Activated CD4-positive, alpha-beta T cell treated with anti-CD3 and anti-CD28 coated beads for 36 hours (primary cell): ENCODE measurements at regions of chr4 and their contacts with region 1.

Region 1: GRCh38 chr4:25439918-25440477 is 62.9 kb downstream of the ANAPC4 start:
- DNase-seq: peak; percentile 73
- ATAC-seq: peak; percentile 89
- H3K4me3 Mint-ChIP-seq: no peak overlapping the region
- H3K27ac Mint-ChIP-seq: no peak overlapping the region
- H3K4me1 Mint-ChIP-seq: no peaks in the 10 kb centered on the region
- H3K27me3 Mint-ChIP-seq: no peaks in the 10 kb centered on the region

Region 2: GRCh38 chr4:25128671-25129070 is 311.3 kb before region 1 on chr4:
- CTCF ChIA-PET with region 1: no interaction called
- POLR2A ChIA-PET with region 1: no interaction called
- intact Hi-C with region 1: no loop called
- DNase-seq: no peak
- ATAC-seq: no peak
- H3K4me3 Mint-ChIP-seq: no peak overlapping the region
- H3K27ac Mint-ChIP-seq: no peak overlapping the region
- H3K4me1 Mint-ChIP-seq: peaks cover 6% of the 10 kb centered on the region
- H3K27me3 Mint-ChIP-seq: no peaks in the 10 kb centered on the region

Region 3: DNA sequence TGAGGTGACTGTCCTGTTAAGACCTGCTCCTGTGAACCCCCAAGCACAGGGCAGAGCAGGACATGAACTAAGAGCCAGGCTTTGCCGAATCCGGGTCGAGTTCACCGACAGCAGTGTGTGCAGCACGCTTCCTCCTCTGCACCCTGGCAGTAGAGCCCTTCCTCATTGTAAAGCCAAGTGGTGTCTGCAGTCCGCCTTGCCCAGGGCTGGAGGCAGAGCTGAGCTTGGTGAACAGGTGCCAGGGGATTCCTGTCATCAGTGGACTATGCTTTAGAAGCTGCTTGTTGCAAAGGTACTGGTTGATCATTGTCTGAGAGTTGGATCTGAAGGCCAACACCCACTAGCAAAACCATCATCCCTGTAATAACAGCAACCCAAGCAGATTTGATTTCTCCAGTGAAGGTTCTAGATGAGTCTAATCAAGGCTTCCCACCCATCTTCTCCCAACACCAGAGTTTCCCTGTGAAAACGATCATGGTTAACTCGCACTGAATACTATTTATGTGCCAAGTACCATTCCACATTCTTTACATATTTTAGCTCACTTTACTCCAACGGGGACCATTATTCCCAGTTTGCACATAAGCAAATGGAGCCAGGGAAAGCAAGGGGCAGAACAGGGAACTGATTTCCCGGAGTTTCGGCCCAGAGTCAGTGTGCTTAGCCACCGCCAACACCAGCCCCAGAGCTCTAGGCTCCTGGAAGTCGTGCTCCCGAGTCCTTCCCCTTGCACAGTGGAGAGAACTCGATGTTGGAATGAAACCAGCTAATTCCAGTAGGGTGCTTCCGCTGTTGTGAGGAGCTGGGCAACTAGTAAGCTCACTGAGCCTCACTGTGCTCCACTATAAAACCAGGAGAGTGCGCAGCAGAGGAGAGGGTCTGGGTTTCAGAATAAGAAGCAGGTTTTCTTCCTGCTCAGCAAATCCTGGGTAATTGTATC is 214.3 kb after region 1 on chr4:
- CTCF ChIA-PET with region 1: no interaction called
- POLR2A ChIA-PET with region 1: no interaction called
- intact Hi-C with region 1: loop called in 1 of 2 experiments (anchors 10 kb)
- DNase-seq: no peak
- ATAC-seq: no peak
- H3K4me3 Mint-ChIP-seq: no peak overlapping the region
- H3K27ac Mint-ChIP-seq: no peak overlapping the region
- H3K4me1 Mint-ChIP-seq: peaks cover 2% of the 10 kb centered on the region
- H3K27me3 Mint-ChIP-seq: peaks cover 28% of the 10 kb centered on the region

Region 4: DNA sequence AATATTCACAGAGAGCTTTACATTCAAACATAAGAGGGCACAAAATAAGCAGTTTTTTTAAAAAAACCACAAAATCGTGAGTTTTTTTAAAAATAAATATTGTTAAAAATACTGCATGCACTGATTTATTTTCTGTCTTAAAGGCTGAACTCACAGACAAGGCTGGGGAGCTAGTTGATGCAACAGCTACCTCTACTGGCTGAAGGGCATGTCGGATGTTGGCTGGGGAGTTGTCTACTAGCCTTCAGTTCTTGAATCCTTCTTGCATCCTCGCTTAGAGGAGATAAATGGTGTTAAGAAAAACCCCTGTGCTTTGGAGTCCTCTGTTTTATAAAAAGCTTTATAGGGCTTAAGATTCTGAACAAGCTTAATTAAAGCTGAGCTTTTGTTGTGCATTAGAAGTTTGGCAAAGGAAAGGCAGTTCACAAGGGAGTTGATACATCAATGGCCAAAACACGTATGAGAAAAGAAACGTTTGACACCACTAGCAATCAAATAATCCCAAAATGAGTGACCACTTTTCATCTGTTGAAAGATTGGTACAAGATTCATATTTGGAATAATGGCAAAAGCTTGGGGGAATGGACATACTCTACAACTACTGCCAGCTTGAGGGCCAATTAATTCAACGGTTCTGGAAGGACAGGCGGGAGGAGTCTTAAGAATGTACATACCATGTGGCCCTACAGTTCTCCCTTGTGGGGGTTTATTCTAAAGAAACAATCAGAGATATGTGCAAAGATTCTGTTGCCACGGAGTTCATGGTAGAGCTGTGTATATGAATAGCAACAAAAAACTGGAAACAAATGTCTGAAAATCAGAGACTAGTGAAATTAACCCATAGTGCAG is 328.1 kb after region 1 on chr4:
- CTCF ChIA-PET with region 1: interaction called, 9 read pairs
- POLR2A ChIA-PET with region 1: no interaction called
- intact Hi-C with region 1: loop called (anchors 1 kb)
- DNase-seq: peak; percentile 41
- ATAC-seq: no peak
- H3K4me3 Mint-ChIP-seq: no peak overlapping the region
- H3K27ac Mint-ChIP-seq: no peak overlapping the region
- H3K4me1 Mint-ChIP-seq: no peaks in the 10 kb centered on the region
- H3K27me3 Mint-ChIP-seq: no peaks in the 10 kb centered on the region